Activated CD8-positive, alpha-beta T cell treated with anti-CD3 and anti-CD28 coated beads for 36 hours (primary cell): ENCODE measurements at regions of chr4 and their contacts with region 1.

Region 1: GRCh38 chr4:38675146-38676121 is 11.4 kb downstream of the KLF3 start:
- DNase-seq: peak; percentile 95
- ATAC-seq: peak; percentile 65
- H3K4me3 Mint-ChIP-seq: peak overlapping the region; percentile 46
- H3K27ac Mint-ChIP-seq: peak overlapping the region; percentile 66
- H3K4me1 Mint-ChIP-seq: peaks cover 82% of the 10 kb centered on the region
- H3K27me3 Mint-ChIP-seq: no peaks in the 10 kb centered on the region
- CTCF ChIP-seq: peak; percentile 87

Region 2: DNA sequence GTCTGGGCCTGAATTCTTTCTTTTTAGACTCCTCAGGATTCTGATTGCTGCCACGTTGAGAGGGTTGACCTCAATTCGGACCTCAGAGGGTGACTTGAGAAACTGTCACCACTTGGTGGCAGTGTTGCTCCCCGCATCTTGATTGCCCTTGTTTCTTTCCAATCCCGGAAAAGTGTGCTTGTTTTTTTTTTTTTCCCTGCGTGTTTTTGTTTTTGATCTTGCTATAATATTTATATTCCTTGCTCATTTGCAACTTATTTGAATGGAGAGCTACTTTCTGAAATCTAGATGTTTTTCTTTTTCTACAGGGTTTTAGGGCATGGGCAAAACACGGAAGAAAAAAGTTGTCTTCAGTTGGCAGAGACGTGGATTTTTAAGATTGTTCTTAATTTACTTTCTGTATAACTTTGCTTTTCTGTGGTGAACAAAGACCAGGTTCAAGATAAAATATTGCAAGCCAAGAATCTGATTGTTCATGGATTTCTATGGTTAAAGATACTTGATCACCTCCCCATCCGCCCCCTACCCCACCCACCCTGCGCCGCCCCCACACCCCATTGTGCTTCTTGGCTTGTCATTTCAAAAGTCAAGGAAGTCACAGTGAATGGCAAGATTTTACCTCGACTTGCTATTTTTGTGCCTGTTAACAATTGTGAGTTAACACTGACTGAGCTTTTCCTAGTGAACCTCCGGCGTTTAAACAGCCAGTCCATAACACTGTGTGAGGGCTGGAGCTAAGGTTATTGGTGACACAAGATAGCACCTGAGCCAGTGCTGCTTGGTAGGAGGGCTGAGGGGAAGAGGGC is 613.1 kb before region 1 on chr4:
- CTCF ChIA-PET with region 1: interaction called, 11 read pairs
- POLR2A ChIA-PET with region 1: no interaction called
- intact Hi-C with region 1: loop called (anchors 10 kb)
- DNase-seq: peak; percentile 78
- ATAC-seq: peak; percentile 62
- H3K4me3 Mint-ChIP-seq: peak overlapping the region; percentile 60
- H3K27ac Mint-ChIP-seq: peak overlapping the region; percentile 73
- H3K4me1 Mint-ChIP-seq: peaks cover 13% of the 10 kb centered on the region
- H3K27me3 Mint-ChIP-seq: no peaks in the 10 kb centered on the region
- CTCF ChIP-seq: peak; percentile 97

Region 3: DNA sequence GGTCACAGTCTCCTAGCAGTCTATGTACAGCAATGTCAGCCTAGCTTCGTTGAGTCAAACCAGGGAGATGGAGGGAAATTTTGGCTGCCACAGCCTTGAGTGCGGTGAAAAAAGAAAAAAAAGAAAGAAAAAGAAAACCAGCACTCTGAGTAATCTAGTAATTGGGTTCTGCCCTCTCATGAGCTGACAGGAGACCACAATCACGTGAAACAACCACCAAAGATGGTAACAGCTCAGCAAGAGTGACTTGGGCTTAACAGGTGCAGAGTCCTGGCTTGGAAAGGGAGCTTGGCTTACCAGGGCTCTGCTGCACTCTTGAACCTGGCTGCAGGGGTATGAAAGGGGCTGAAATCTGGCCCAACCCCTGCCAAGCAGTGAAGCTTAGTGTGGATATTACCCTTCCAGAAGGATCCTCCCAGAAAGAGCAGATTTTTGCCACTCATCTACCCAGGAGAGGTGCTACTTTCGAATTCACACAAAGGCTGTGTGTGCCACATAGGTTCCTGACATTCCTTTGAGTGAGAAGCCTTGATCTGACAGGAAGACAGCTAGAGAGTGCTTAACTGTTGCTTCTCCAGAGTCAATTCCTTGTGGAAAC is 364.9 kb before region 1 on chr4:
- CTCF ChIA-PET with region 1: interaction called, 22 read pairs
- POLR2A ChIA-PET with region 1: no interaction called
- intact Hi-C with region 1: no loop called
- DNase-seq: peak; percentile 90
- ATAC-seq: peak; percentile 81
- H3K4me3 Mint-ChIP-seq: peak overlapping the region; percentile 34
- H3K27ac Mint-ChIP-seq: peak overlapping the region; percentile 81
- H3K4me1 Mint-ChIP-seq: peaks cover 68% of the 10 kb centered on the region
- H3K27me3 Mint-ChIP-seq: peaks cover 3% of the 10 kb centered on the region
- CTCF ChIP-seq: no peak

Region 4: GRCh38 chr4:38514465-38515146 is 160.8 kb before region 1 on chr4:
- CTCF ChIA-PET with region 1: interaction called, 6 read pairs
- POLR2A ChIA-PET with region 1: no interaction called
- intact Hi-C with region 1: loop called (anchors 10 kb)
- DNase-seq: peak; percentile 35
- ATAC-seq: peak; percentile 82
- H3K4me3 Mint-ChIP-seq: no peak overlapping the region
- H3K27ac Mint-ChIP-seq: no peak overlapping the region
- H3K4me1 Mint-ChIP-seq: peaks cover 59% of the 10 kb centered on the region
- H3K27me3 Mint-ChIP-seq: no peaks in the 10 kb centered on the region
- CTCF ChIP-seq: no peak

Region 5: GRCh38 chr4:38562751-38563198 is 112.7 kb before region 1 on chr4:
- CTCF ChIA-PET with region 1: no interaction called
- POLR2A ChIA-PET with region 1: no interaction called
- intact Hi-C with region 1: no loop called
- DNase-seq: no peak
- ATAC-seq: no peak
- H3K4me3 Mint-ChIP-seq: no peak overlapping the region
- H3K27ac Mint-ChIP-seq: no peak overlapping the region
- H3K4me1 Mint-ChIP-seq: peaks cover 16% of the 10 kb centered on the region
- H3K27me3 Mint-ChIP-seq: no peaks in the 10 kb centered on the region
- CTCF ChIP-seq: no peak

Region 6: DNA sequence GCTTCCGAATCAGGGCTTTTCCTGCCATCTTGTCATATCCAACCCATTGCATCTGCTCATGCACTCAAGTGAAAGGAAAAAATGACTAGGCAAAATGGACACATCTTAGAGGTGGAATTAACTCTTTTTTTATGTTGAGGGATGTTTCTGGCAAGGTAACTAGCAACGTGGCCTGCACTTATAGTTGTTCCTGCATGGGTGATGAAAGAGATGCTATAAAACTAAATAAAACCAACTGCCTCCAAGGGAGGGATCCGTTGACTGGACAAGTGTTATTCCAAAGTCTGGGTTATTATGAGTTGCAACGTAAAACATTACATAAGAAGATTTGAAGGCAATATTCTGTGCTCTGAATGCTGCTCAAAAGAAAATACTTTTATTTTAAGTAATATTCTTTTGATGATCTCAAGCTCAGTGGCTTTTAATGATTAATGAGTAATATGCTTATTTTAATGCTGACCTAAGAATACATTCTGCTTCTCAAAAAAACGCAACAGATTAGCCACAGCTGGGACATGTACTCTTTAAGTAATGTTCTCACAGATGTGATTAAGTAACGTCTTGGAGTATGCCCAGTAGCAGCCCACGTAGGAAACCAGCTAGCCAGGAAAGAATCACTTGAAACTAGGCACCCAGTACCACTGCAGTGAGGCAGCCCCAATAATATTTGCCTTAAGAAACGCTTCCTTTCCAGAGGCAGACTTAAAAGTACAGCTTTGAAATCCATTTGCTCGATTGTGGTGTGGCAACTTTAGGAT is 16.0 kb after region 1 on chr4:
- CTCF ChIA-PET with region 1: interaction called, 36 read pairs
- POLR2A ChIA-PET with region 1: no interaction called
- intact Hi-C with region 1: no loop called
- DNase-seq: no peak
- ATAC-seq: no peak
- H3K4me3 Mint-ChIP-seq: no peak overlapping the region
- H3K27ac Mint-ChIP-seq: no peak overlapping the region
- H3K4me1 Mint-ChIP-seq: peaks cover 31% of the 10 kb centered on the region
- H3K27me3 Mint-ChIP-seq: no peaks in the 10 kb centered on the region
- CTCF ChIP-seq: no peak

Region 7: DNA sequence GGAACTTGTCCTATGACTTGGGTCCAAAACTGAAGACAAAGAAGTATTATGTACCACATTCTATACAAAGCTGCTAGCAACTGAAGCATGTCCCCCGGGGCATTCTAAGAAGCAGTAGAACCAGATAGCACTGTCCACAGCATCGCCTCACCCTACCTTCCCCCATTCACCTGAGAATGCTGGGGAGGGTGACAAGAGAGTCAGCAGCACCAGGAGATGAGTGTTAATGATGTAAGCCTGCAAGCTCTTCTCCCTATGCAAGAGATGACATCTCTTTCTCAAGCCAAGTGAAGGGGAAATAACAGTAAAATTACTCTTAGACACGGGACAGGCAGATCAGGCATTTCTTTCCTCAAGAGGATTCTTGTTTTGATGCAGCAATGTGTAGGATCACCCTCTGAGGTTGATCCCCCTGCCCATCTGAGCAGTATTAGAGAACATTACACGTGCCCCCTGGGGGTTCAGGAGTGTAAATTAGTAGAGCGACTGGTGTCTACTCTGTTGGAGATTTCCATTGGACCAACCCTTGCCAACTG is 143.1 kb after region 1 on chr4:
- CTCF ChIA-PET with region 1: no interaction called
- POLR2A ChIA-PET with region 1: no interaction called
- intact Hi-C with region 1: no loop called
- DNase-seq: no peak
- ATAC-seq: no peak
- H3K4me3 Mint-ChIP-seq: no peak overlapping the region
- H3K27ac Mint-ChIP-seq: no peak overlapping the region
- H3K4me1 Mint-ChIP-seq: peaks cover 13% of the 10 kb centered on the region
- H3K27me3 Mint-ChIP-seq: no peaks in the 10 kb centered on the region
- CTCF ChIP-seq: no peak

Region 8: GRCh38 chr4:38939165-38939564 is 263.7 kb after region 1 on chr4:
- CTCF ChIA-PET with region 1: no interaction called
- POLR2A ChIA-PET with region 1: no interaction called
- intact Hi-C with region 1: no loop called
- DNase-seq: no peak
- ATAC-seq: peak; percentile 91
- H3K4me3 Mint-ChIP-seq: no peak overlapping the region
- H3K27ac Mint-ChIP-seq: no peak overlapping the region
- H3K4me1 Mint-ChIP-seq: peaks cover 23% of the 10 kb centered on the region
- H3K27me3 Mint-ChIP-seq: no peaks in the 10 kb centered on the region
- CTCF ChIP-seq: no peak

Region 9: DNA sequence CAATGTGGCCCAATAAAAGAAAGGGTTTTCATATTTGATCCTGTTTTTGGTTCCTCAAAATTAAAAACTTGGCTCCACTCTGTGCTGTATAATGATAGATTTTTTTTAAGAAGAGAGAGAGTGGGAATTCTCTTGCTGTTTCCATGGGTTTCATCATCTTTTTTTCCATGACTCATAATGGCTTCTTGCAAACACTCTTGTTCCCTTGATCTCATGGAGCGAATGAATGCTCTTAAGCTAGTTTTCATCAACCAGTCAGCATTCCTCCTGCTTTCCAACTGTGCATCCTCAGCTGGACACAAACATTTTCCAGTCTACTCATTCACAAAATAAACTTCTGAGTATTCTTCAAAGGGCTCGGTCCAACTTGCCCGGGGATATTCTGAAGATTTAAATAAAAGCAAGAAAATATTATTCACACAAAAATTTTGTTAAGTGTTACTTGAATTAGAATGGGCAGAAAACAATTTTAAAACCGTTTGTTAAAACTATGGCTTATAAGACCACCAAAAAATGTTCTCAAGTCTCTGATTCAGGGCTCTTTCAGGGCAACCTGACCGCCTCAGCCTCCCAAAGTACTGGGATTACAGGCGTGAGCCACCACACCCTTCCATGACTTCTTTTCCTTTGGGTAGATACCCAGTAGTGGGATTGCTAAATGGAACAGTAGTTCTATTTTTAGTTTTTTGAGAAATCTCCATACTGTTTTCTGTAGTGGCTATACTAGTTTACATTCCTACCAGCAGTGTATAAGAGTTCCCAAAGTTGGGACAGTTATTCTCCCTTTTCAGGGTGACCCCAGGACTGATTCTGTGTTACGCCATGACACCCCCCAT is 292.0 kb after region 1 on chr4:
- CTCF ChIA-PET with region 1: no interaction called
- POLR2A ChIA-PET with region 1: no interaction called
- intact Hi-C with region 1: no loop called
- DNase-seq: no peak
- ATAC-seq: no peak
- H3K4me3 Mint-ChIP-seq: no peak overlapping the region
- H3K27ac Mint-ChIP-seq: peak overlapping the region; percentile 75
- H3K4me1 Mint-ChIP-seq: peaks cover 14% of the 10 kb centered on the region
- H3K27me3 Mint-ChIP-seq: no peaks in the 10 kb centered on the region
- CTCF ChIP-seq: no peak